ENCODE measurements at regions of chr3 and their contacts with region 1.

Region 1: DNA sequence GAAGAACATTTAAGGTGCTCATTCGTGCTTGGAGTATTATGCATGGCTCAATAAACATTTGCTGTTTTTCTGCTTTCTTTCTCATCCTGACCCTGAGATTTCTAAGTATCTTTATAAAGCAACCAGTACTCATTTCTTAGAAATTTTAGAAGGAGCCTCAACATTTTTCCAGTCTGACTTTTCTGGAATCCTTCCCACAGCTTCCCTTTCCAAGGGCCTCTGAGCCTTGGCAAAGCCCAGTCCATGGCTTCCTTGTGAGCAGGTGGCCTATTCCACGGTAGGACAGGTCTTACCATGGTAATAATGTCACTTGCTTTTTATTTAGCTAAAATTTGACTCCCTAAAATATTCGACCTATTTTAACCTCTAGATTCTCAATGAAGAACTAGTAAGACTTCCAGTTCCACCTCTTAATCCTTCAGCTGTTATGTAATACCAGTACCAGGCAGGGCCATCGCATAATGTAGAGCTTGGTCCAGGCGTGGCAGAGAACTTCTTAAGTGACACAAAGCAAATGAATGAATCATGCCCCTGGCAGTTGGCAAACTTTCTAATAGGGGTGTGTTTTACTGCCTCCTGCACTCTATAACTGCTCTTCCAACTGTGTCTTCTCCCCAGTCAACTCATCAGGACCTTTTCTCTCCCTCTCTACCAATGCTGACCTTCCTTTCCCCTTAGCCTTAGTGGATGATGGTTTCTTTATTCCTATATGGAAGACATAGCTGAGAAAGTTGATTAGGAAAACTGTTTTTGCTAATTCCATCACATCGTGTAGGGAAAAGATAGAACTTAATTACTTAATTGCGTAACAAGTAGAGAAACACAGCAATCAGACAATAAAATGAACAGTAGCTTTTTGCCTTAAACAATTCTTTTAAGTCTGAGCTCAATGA is 894 bp upstream of the TM4SF4 start:
- DNase-seq: peak; percentile 71
- H3K4me3 ChIP-seq: no peak overlapping the region
- H3K27ac ChIP-seq: peak overlapping the region; percentile 27 to 43 (median 36)
- H3K4me1 ChIP-seq: peaks cover 4 to 25% (median 11%) of the 10 kb centered on the region in 4 donors
- H3K27me3 ChIP-seq: no peaks in the 10 kb centered on the region
- CTCF ChIP-seq: no peak
- EP300 ChIP-seq: no peak
- POLR2A ChIP-seq: no peak

Region 2: GRCh38 chr3:149352556-149352955 is 121.0 kb before region 1 on chr3:
- in situ Hi-C with region 1: loop called in 1 of 4 experiments (anchors 10 kb)
- intact Hi-C with region 1: no loop called
- DNase-seq: peak; percentile 46
- H3K4me3 ChIP-seq: no peak overlapping the region
- H3K27ac ChIP-seq: no peak overlapping the region
- H3K4me1 ChIP-seq: peaks cover 0 to 10% (median 0%) of the 10 kb centered on the region in 4 donors
- H3K27me3 ChIP-seq: no peaks in the 10 kb centered on the region
- CTCF ChIP-seq: peak; percentile 61 to 69 (median 62)
- EP300 ChIP-seq: no peak
- POLR2A ChIP-seq: no peak

Region 3: DNA sequence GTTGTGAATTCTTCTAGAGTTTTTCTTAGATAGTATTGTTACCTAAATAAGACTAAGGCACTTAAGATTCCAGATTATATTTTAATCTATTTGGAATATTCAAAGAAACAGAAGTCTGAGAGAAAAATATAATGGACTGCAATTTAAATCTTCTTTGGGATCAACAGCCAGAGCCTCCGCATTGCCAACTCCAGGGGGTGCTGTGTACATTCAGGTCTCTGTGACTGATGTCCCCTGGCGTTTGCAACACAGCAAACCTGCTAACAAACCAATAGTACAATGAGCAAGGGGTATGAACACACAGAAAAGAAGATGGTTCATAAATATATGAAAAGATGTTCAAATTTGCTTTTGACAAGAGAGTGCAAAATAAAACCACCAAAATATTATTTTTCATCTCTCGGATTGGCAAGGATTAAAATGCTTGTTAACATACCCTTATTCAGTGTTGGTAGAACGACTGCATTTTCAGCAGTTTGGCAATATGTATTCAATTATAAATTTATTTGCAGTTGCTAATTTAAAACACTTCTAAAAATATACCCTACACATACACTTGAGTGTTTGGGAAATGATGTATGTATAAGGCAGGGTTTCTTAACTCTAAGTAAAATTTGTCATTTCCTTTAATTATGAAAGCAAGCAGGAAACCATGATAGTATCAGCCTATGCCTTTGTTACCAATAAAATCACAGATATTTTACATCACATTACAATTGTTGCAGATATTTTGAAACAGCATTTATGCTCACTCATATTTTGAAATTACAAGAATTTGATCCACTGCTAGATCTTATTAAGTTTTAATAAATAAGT is 80.0 kb before region 1 on chr3:
- in situ Hi-C with region 1: loop called in 1 of 4 experiments (anchors 10 kb)
- intact Hi-C with region 1: no loop called
- DNase-seq: peak; percentile 71
- H3K4me3 ChIP-seq: no peak overlapping the region
- H3K27ac ChIP-seq: no peak overlapping the region
- H3K4me1 ChIP-seq: peaks cover 0 to 5% (median 0%) of the 10 kb centered on the region in 4 donors
- H3K27me3 ChIP-seq: no peaks in the 10 kb centered on the region
- CTCF ChIP-seq: peak; percentile 66 to 88 (median 80)
- EP300 ChIP-seq: no peak
- POLR2A ChIP-seq: no peak

Region 4: GRCh38 chr3:149442851-149443544 is 30.6 kb before region 1 on chr3:
- in situ Hi-C with region 1: no loop called
- intact Hi-C with region 1: no loop called
- DNase-seq: no peak
- H3K4me3 ChIP-seq: no peak overlapping the region
- H3K27ac ChIP-seq: no peak overlapping the region
- H3K4me1 ChIP-seq: peaks cover 0 to 8% (median 0%) of the 10 kb centered on the region in 4 donors
- H3K27me3 ChIP-seq: no peaks in the 10 kb centered on the region
- CTCF ChIP-seq: no peak
- EP300 ChIP-seq: no peak
- POLR2A ChIP-seq: no peak

Measured in transverse colon (tissue), 4 donors.